Activated B cell treated with CpG ODN at 0.5 μM for 24 hours (primary cell): ENCODE measurements at regions of chr4 and their contacts with region 1.

Region 1: DNA sequence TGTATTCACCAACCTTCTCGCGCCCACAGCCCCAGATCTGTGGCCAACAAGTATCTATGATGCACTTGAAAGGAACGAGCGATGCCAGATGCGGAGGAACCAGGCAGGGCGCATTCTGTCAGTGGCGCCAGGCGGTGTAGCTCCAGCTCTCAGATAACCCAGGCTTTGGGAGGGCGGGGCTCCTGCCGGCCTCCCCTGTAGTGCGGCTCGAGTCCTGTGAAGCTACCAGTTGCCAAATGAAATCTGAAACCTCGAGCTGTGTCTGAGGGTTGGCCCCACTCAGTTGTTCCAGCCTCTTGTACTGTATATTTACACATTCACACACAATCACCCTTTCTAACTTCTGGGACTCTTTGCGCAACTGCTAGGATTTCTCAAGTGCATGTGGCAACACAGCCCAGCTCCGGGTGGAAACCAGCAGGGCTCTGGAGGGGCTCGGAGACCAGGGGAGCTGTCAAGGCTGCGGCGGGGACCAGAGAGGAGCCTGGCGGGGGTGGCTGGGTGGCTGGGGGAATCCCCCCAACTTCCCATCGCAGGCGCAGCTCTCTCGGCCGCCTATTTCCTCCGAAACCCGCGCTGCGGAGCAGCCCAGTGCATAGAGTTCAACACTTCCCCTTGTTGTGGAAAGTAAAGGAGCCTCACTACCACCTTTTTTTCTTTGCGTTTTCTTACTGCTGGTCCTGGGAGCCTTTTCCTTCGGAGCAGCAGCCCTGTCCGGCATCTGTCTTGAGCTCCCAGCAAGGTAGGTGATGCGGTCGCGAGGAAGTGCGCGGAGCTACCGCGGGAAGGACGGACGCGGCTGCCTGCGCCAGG is at the start of gene ARHGAP24:
- DNase-seq: peak; percentile 79
- ATAC-seq: peak; percentile 89
- H3K4me3 Mint-ChIP-seq: peak within 1 kb of the TSS; percentile 99
- H3K27ac Mint-ChIP-seq: peak within 1 kb of the TSS; percentile 99
- H3K4me1 Mint-ChIP-seq: peaks cover 52% of the 10 kb centered on the region
- H3K27me3 Mint-ChIP-seq: no peaks in the 10 kb centered on the region
- CTCF ChIP-seq: no peak
- total RNA-seq, gene ARHGAP24: 155 and 231 TPM in 2 replicates

Region 2: GRCh38 chr4:85147439-85148076 is 327.5 kb before region 1 on chr4:
- CTCF ChIA-PET with region 1: no interaction called
- POLR2A ChIA-PET with region 1: no interaction called
- intact Hi-C with region 1: loop called (anchors 5 kb)
- DNase-seq: no peak
- ATAC-seq: peak; percentile 86
- H3K4me3 Mint-ChIP-seq: no peak overlapping the region
- H3K27ac Mint-ChIP-seq: no peak overlapping the region
- H3K4me1 Mint-ChIP-seq: peaks cover 5% of the 10 kb centered on the region
- H3K27me3 Mint-ChIP-seq: no peaks in the 10 kb centered on the region
- CTCF ChIP-seq: peak; percentile 40

Region 3: GRCh38 chr4:85381968-85382367 is 93.1 kb before region 1 on chr4:
- CTCF ChIA-PET with region 1: no interaction called
- POLR2A ChIA-PET with region 1: no interaction called
- intact Hi-C with region 1: no loop called
- DNase-seq: no peak
- ATAC-seq: no peak
- H3K4me3 Mint-ChIP-seq: no peak overlapping the region
- H3K27ac Mint-ChIP-seq: no peak overlapping the region
- H3K4me1 Mint-ChIP-seq: peaks cover 2% of the 10 kb centered on the region
- H3K27me3 Mint-ChIP-seq: no peaks in the 10 kb centered on the region
- CTCF ChIP-seq: no peak

Region 4: GRCh38 chr4:85448869-85449626 is 26.0 kb before region 1 on chr4:
- CTCF ChIA-PET with region 1: interaction called, 3 read pairs
- POLR2A ChIA-PET with region 1: interaction called, 26 read pairs
- intact Hi-C with region 1: loop called (anchors 1 kb)
- DNase-seq: no peak
- ATAC-seq: peak; percentile 76
- H3K4me3 Mint-ChIP-seq: peak overlapping the region; percentile 64
- H3K27ac Mint-ChIP-seq: peak overlapping the region; percentile 56
- H3K4me1 Mint-ChIP-seq: peaks cover 39% of the 10 kb centered on the region
- H3K27me3 Mint-ChIP-seq: no peaks in the 10 kb centered on the region
- CTCF ChIP-seq: no peak

Region 5: DNA sequence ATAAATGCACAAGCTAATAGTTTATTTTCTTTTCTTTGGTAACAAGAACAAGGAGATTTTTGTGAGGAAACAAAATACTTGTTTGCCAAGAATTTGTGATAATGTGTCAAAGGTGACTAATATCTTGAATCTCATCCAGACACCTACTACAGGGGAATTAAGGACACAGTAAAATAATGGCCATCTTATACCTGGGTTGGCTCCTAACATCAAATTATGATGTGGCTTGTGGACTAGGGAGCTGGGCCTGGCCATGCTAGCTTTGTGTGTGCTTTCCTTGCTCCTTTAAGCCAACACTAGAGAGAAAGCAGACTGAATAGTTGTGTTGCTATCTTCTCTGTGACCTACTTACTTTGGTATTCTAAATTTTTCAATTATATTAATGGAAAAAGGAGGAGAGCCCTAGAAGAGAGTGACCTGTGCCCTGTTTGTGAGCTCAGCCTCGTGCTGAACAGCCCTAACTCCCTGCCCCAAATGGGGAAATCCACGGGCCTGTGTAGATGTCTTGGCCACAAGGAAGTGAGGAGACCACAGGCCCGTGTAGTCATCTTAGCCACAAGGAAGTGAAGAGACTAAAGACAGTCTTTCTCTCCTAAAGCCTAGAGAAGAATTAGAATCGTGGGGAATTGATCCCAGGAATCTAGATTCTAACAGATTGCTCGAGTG is 23.2 kb after region 1 on chr4:
- CTCF ChIA-PET with region 1: interaction called, 5 read pairs
- POLR2A ChIA-PET with region 1: interaction called, 27 read pairs
- intact Hi-C with region 1: loop called (anchors 2 kb)
- DNase-seq: peak; percentile 35
- ATAC-seq: peak; percentile 98
- H3K4me3 Mint-ChIP-seq: peak overlapping the region; percentile 44
- H3K27ac Mint-ChIP-seq: peak overlapping the region; percentile 81
- H3K4me1 Mint-ChIP-seq: peaks cover 75% of the 10 kb centered on the region
- H3K27me3 Mint-ChIP-seq: no peaks in the 10 kb centered on the region
- CTCF ChIP-seq: no peak

Region 6: DNA sequence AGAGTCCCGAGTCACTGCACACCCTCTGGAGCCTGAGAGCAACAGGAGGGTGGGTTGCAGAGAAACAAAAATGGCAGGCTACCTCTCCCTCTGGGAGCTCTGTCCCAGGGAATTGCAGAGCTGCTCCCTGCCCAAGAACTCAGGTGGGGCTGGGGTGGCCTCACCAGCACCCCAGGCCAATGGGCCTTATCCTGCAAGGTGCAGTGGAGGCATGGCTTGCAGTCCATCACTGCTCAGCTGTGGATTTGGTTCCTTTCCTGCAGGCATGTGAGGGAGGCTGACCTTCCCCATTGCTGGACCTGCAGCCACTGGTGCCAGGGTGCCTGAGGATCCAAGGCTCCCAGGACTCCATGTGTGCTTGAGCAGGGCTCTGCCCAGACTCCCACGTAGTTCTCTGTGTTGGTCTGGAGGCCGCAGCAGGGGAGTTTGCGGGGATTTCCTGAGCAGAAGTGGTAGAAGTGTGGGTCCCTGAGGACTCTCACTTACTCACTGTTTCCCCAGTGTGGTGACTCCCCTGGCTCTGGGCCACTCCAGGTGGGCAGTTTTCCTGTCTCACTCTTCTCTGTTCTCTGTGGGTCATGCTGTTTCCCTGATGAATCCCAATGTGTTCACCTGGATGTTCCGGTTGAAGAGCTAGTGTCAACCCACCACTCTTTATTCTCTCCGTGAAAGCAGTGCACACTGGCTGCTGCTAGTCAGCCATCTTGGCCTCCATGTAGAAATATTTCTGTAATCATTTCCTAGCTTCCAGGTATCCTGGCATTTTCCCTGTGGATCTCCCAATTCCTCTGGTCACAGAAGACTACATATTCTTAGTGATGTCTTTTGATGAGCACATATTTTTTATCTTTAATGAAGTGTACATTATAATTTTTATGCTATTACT is 82.2 kb after region 1 on chr4:
- CTCF ChIA-PET with region 1: interaction called, 3 read pairs
- POLR2A ChIA-PET with region 1: interaction called, 27 read pairs
- intact Hi-C with region 1: loop called (anchors 1 kb)
- DNase-seq: peak; percentile 83
- ATAC-seq: peak; percentile 84
- H3K4me3 Mint-ChIP-seq: peak overlapping the region; percentile 61
- H3K27ac Mint-ChIP-seq: peak overlapping the region; percentile 96
- H3K4me1 Mint-ChIP-seq: peaks cover 80% of the 10 kb centered on the region
- H3K27me3 Mint-ChIP-seq: no peaks in the 10 kb centered on the region
- CTCF ChIP-seq: no peak

Region 7: GRCh38 chr4:85701861-85702321 is 226.9 kb after region 1 on chr4:
- CTCF ChIA-PET with region 1: no interaction called
- POLR2A ChIA-PET with region 1: interaction called, 15 read pairs
- intact Hi-C with region 1: loop called (anchors 1 kb)
- DNase-seq: no peak
- ATAC-seq: peak; percentile 80
- H3K4me3 Mint-ChIP-seq: peak overlapping the region; percentile 70
- H3K27ac Mint-ChIP-seq: peak overlapping the region; percentile 93
- H3K4me1 Mint-ChIP-seq: peaks cover 73% of the 10 kb centered on the region
- H3K27me3 Mint-ChIP-seq: no peaks in the 10 kb centered on the region
- CTCF ChIP-seq: no peak